Endothelial cell of umbilical vein (primary cell): ENCODE measurements at regions of chr2 and their contacts with region 1.

Region 1: DNA sequence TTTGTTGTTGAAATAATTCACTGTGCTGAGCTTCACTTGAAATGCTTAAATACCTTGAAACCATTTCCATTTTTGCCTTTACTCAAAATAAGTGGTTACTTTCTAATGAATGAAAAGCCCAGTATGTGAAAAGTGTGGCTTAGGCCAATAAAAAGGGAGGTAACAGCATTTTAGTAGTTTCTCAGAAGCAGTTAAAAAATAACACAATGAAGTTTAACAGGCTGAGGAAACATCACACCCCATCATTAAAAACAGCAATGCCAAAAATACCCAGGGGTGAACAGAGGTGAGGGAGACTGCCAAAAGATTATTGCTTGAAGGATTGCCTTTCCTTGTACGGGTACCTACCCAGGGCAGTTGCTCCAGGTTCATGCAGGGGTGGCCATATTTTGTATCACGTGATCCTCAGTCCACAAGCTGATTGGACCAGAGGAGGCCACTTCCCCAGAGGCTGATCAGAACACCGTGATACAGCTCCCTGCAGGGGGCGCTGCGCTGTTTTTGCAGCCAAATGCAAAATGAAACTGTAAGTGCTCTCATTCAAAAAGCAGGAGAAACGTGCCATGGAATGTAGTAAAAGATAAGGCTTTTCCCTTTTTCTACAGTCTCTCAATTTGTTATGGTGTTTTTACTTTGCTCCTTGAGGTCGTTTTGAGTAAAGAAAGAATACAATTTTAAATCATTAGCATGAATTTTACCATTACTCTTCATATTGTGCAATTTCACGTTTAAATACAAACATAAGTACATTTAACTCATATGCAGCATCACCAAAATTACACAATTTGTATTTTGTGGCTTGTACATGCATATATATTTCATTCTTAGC is 70.2 kb upstream of the SH3BP4 start:
- DNase-seq: peak; percentile 92
- H3K4me3 ChIP-seq: peak overlapping the region in 1 of 3 experiments; percentile 12
- H3K27ac ChIP-seq: peak overlapping the region; percentile 79
- H3K4me1 ChIP-seq: peaks cover 23% of the 10 kb centered on the region
- H3K27me3 ChIP-seq: no peaks in the 10 kb centered on the region
- CTCF ChIP-seq: peak; percentile 87 to 91
- POLR2A ChIP-seq: peak; percentile 23

Region 2: DNA sequence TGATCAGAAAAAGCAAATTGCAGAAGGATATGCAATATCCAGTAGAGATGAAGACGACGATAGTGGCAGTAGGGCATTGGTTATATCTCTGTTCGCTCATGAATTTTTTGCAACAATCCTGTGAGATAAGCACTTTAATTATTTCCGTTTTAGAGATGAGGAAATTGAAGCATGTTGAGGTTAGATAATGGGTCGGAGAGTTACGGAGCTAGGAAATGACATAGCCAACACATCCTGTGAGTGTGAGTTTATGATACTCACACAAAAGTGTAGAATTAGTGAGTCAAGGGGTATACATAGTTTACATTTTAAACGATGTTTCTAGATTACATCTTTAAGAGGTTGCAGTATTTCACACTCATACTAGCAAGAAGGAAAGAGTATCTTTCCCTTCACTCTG is 261.6 kb before region 1 on chr2:
- CTCF ChIA-PET with region 1: interaction called, 5 read pairs
- POLR2A ChIA-PET with region 1: no interaction called
- dilution Hi-C with region 1: no loop called
- intact Hi-C with region 1: loop called (anchors 2 kb)
- DNase-seq: peak; percentile 84
- H3K4me3 ChIP-seq: no peak overlapping the region
- H3K27ac ChIP-seq: no peak overlapping the region
- H3K4me1 ChIP-seq: peaks cover 20% of the 10 kb centered on the region
- H3K27me3 ChIP-seq: peaks cover 34 to 41% of the 10 kb centered on the region in 2 experiments
- CTCF ChIP-seq: no peak
- POLR2A ChIP-seq: peak; percentile 73

Region 3: GRCh38 chr2:234823877-234824376 is 57.7 kb before region 1 on chr2:
- CTCF ChIA-PET with region 1: interaction called, 21 read pairs
- POLR2A ChIA-PET with region 1: interaction called, 3 read pairs
- dilution Hi-C with region 1: no loop called
- intact Hi-C with region 1: loop called (anchors 1 kb)
- DNase-seq: peak; percentile 98
- H3K4me3 ChIP-seq: no peak overlapping the region
- H3K27ac ChIP-seq: peak overlapping the region; percentile 90
- H3K4me1 ChIP-seq: peaks cover 24% of the 10 kb centered on the region
- H3K27me3 ChIP-seq: no peaks in the 10 kb centered on the region
- CTCF ChIP-seq: no peak
- POLR2A ChIP-seq: peak; percentile 69

Region 4: DNA sequence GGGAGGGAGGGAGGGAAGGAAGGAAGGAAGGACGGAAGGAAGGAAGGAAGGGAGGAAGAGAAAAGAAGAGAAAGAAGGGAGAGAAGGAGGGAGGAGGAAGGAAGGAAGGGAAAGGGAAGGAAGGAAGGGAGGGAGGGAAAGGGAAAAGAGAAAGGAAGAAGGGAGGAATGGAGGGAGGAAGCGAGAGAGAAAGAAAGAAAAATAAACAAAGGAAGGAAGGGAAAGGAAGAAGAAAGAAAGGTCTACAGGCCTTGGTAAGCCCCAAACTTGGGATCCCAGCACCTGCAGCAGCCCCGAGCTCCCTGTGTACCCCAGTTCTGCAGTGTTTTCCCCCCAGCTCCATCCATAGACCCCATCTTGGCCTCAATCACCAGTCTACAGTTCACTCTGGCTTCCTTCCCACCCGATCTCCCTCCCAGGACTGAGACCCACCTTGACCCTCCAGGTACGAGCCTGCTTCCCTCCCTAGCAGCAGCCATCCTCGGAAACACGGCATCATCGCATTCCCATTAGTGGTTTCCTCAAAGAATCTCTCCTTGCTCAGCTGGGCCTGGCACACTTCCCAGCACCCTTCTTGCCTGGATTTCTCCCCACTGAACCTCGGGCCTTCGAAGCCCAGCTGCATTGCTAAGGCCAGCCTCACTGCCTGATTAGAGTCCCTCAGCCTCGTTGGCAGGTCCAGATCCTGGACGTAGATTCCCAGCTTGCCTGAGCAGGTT is 24.1 kb after region 1 on chr2:
- CTCF ChIA-PET with region 1: interaction called, 10 read pairs
- POLR2A ChIA-PET with region 1: no interaction called
- dilution Hi-C with region 1: no loop called
- intact Hi-C with region 1: no loop called
- DNase-seq: no peak
- H3K4me3 ChIP-seq: no peak overlapping the region
- H3K27ac ChIP-seq: no peak overlapping the region
- H3K4me1 ChIP-seq: no peaks in the 10 kb centered on the region
- H3K27me3 ChIP-seq: no peaks in the 10 kb centered on the region
- CTCF ChIP-seq: no peak
- POLR2A ChIP-seq: no peak

Region 5: DNA sequence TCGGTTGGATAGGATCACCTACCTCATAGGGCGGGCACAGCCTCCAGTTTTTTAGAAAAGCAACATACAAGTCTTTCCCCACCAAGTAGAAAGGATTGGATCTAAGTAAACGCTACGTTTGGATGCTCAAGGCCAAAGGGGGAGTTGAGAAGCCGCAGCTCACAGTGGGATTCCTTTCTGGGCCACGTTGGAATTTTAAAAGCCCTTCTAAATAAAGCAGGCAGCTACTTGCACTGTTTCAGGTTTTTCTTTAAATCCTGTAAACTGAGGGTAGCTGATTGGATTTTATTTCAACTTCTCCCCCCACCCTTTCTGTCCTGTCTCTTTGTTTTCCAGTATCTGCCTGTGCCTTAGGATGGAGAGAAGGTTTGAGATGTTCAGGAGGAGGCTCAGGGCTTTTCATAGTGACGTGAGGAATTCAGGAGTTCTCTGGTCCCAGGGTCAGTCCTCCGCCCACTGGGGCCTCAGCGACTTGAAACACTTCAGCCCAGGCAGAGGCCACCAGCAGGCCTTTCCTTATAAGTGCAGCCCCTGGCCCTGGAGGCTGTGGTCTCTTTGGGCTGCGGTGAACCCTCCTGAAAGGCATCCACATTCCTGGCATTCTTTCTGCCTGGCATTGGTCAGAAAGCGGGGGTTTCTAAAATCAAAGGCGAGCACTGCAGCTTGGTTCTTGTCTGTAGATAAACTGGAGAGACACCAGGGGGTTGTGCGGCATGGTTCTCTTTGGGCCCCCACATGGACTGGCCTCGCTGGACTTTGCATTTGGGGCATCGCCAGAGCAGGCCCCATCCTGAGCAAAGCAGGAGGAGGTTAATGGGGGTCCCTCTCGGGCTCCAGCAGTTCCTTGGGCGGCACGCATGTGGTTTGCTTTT is 114.7 kb after region 1 on chr2:
- CTCF ChIA-PET with region 1: interaction called, 5 read pairs
- POLR2A ChIA-PET with region 1: no interaction called
- dilution Hi-C with region 1: no loop called
- intact Hi-C with region 1: loop called (anchors 2 kb)
- DNase-seq: peak; percentile 64
- H3K4me3 ChIP-seq: no peak overlapping the region
- H3K27ac ChIP-seq: peak overlapping the region; percentile 88
- H3K4me1 ChIP-seq: peaks cover 56% of the 10 kb centered on the region
- H3K27me3 ChIP-seq: no peaks in the 10 kb centered on the region
- CTCF ChIP-seq: peak; percentile 41 to 53
- POLR2A ChIP-seq: no peak